Panc1 (cell line): ENCODE measurements at regions of chr3 and their contacts with region 1.

Region 1: GRCh38 chr3:155701882-155702465 is 42.9 kb downstream of the PLCH1 start:
- DNase-seq: no peak
- ATAC-seq: 0 out of 2 replicates have a peak, but pooled peaks have one; percentile 71
- H3K4me3 ChIP-seq: no peak overlapping the region
- H3K27ac ChIP-seq: no peak overlapping the region
- H3K4me1 ChIP-seq: no peaks in the 10 kb centered on the region
- H3K27me3 ChIP-seq: peaks cover 9% of the 10 kb centered on the region; the same call in 1 of the 2 replicates
- CTCF ChIP-seq: peak; percentile 68; the same call in 1 of the 2 replicates

Region 2: GRCh38 chr3:154758109-154758868 is 943.7 kb before region 1 on chr3:
- CTCF ChIA-PET with region 1: no interaction called
- POLR2A ChIA-PET with region 1: no interaction called
- in situ Hi-C with region 1: no loop called
- intact Hi-C with region 1: loop called (anchors 10 kb)
- DNase-seq: no peak
- ATAC-seq: no peak
- H3K4me3 ChIP-seq: no peak overlapping the region
- H3K27ac ChIP-seq: no peak overlapping the region
- H3K4me1 ChIP-seq: no peaks in the 10 kb centered on the region
- H3K27me3 ChIP-seq: no peaks in the 10 kb centered on the region
- CTCF ChIP-seq: peak; percentile 57; the same call in 1 of the 2 replicates

Region 3: GRCh38 chr3:155302481-155302880 is 399.5 kb before region 1 on chr3:
- CTCF ChIA-PET with region 1: no interaction called
- POLR2A ChIA-PET with region 1: no interaction called
- in situ Hi-C with region 1: no loop called
- intact Hi-C with region 1: no loop called
- DNase-seq: no peak
- ATAC-seq: no peak
- H3K4me3 ChIP-seq: no peak overlapping the region
- H3K27ac ChIP-seq: no peak overlapping the region
- H3K4me1 ChIP-seq: no peaks in the 10 kb centered on the region
- H3K27me3 ChIP-seq: no peaks in the 10 kb centered on the region
- CTCF ChIP-seq: no peak

Region 4: GRCh38 chr3:155342344-155342743 is 359.6 kb before region 1 on chr3:
- CTCF ChIA-PET with region 1: no interaction called
- POLR2A ChIA-PET with region 1: no interaction called
- in situ Hi-C with region 1: no loop called
- intact Hi-C with region 1: no loop called
- DNase-seq: no peak
- ATAC-seq: no peak
- H3K4me3 ChIP-seq: no peak overlapping the region
- H3K27ac ChIP-seq: no peak overlapping the region
- H3K4me1 ChIP-seq: no peaks in the 10 kb centered on the region
- H3K27me3 ChIP-seq: no peaks in the 10 kb centered on the region
- CTCF ChIP-seq: no peak

Region 5: DNA sequence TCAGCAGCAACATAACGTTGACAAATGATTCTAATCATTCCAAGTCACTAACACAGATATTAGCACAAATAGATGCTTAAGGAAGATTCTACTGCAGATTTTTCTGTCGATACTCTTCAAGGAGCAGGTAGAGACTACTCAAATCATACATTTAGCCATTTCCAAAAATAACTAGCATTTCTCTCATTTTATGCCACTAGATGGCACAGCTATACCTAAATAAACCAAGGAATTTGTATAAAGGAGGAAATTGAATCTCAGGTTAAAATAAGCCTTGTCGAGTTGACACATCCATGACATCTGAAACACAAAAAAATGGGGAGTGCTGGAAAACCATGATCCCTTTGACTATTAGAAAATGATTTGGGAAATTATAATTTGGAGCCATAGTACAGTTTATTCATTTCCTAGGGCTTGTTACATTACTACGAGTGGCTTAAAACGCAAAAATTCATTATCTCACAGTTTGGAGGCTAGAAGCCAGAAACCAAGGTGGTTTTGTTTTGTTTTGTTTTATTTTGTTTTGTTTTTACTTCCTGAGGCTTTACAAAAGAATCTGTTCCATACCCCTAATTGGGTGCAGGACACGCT is 349.0 kb before region 1 on chr3:
- CTCF ChIA-PET with region 1: interaction called, 10 read pairs
- POLR2A ChIA-PET with region 1: no interaction called
- in situ Hi-C with region 1: no loop called
- intact Hi-C with region 1: loop called (anchors 1 kb)
- DNase-seq: peak; percentile 24
- ATAC-seq: peak; percentile 73
- H3K4me3 ChIP-seq: no peak overlapping the region
- H3K27ac ChIP-seq: no peak overlapping the region
- H3K4me1 ChIP-seq: no peaks in the 10 kb centered on the region
- H3K27me3 ChIP-seq: no peaks in the 10 kb centered on the region
- CTCF ChIP-seq: peak; percentile 59; the same call in 1 of the 2 replicates

Region 6: GRCh38 chr3:155382396-155383042 is 319.5 kb before region 1 on chr3:
- CTCF ChIA-PET with region 1: interaction called, 9 read pairs
- POLR2A ChIA-PET with region 1: no interaction called
- in situ Hi-C with region 1: no loop called
- intact Hi-C with region 1: loop called (anchors 2 kb)
- DNase-seq: peak; percentile 27
- ATAC-seq: peak; percentile 91
- H3K4me3 ChIP-seq: no peak overlapping the region
- H3K27ac ChIP-seq: no peak overlapping the region
- H3K4me1 ChIP-seq: no peaks in the 10 kb centered on the region
- H3K27me3 ChIP-seq: no peaks in the 10 kb centered on the region
- CTCF ChIP-seq: peak; percentile 83